Ovary (tissue), 10 donors: ENCODE measurements at regions of chr1 and their contacts with region 1.

Region 1: DNA sequence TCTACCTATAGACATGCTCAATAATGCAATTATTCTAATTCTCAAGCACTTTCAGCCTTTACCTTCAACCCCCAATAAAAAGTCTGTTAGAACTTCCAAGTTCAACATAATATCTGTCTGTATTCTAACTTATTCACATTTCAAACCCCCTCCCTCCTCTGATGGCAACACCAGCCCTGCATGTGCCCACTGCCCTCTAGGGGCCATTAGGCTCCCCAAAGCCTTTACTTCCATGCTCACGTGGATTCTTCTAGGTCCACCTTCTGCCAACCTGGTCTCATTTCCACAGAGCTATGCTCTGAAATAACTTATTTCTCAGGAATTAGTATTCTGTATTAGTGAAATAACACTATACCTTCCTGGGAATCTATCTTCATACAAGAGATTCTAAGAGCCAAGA is 22.2 kb upstream of the KPRP start:
- DNase-seq: no peak
- H3K4me3 ChIP-seq: no peak overlapping the region
- H3K27ac ChIP-seq: no peak overlapping the region
- H3K4me1 ChIP-seq: no peaks in the 10 kb centered on the region
- H3K27me3 ChIP-seq: no peaks in the 10 kb centered on the region
- CTCF ChIP-seq: no peak
- EP300 ChIP-seq: no peak
- POLR2A ChIP-seq: no peak

Region 2: DNA sequence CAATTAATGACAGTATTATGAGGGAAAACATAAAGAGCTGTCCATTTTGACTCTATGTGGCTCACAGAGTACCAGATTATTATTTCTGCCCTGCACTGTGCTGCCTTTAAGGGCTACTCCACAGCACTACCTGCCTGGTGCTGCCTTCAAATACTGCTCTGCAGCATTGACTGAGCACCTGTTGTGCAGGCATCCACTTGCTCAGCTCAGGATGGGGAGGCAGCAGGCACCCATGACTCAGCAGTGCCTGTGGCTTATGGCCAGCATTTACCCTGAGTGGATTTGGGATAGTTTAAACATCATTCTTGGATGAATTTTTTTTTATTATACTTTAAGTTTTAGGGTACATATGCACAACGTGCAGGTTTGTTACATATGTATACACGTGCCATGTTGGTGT is 21.2 kb after region 1 on chr1:
- intact Hi-C with region 1: loop called in 1 of 4 experiments (anchors 1 kb)
- DNase-seq: no peak
- H3K4me3 ChIP-seq: no peak overlapping the region
- H3K27ac ChIP-seq: no peak overlapping the region
- H3K4me1 ChIP-seq: no peaks in the 10 kb centered on the region
- H3K27me3 ChIP-seq: no peaks in the 10 kb centered on the region
- CTCF ChIP-seq: no peak
- EP300 ChIP-seq: no peak
- POLR2A ChIP-seq: no peak